GM10248 (cell line): ENCODE measurements at regions of chr17 and their contacts with region 1.

Region 1: GRCh38 chr17:76623271-76624146 is 20.0 kb downstream of the ST6GALNAC1 start:
- DNase-seq: peak; percentile 86
- CTCF ChIP-seq: peak; percentile 95

Region 2: DNA sequence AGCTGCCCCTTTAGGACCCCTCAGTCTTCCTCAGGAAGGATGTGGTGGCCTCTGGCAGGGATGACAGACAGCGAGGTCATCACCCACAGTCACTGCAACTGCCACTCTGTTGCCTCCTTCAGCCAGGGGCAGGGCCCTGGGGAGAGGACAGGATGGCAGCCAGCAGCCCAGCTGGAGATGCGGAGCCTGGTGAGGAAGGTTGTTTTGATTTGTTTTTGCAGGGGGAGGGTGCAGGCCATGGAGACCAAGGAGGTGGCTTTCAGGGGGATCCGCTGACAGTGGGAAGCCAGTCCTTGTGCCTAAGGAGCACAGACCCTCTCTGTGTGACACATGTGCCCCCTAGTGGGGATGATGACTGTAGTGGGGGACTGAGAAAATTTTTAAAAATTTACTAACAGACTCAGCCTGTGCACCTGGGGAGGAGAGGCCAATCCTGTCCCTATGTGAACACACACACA is 76.3 kb before region 1 on chr17:
- CTCF ChIA-PET with region 1: interaction called, 10 read pairs
- POLR2A ChIA-PET with region 1: no interaction called
- DNase-seq: peak; percentile 72
- CTCF ChIP-seq: peak; percentile 55

Region 3: DNA sequence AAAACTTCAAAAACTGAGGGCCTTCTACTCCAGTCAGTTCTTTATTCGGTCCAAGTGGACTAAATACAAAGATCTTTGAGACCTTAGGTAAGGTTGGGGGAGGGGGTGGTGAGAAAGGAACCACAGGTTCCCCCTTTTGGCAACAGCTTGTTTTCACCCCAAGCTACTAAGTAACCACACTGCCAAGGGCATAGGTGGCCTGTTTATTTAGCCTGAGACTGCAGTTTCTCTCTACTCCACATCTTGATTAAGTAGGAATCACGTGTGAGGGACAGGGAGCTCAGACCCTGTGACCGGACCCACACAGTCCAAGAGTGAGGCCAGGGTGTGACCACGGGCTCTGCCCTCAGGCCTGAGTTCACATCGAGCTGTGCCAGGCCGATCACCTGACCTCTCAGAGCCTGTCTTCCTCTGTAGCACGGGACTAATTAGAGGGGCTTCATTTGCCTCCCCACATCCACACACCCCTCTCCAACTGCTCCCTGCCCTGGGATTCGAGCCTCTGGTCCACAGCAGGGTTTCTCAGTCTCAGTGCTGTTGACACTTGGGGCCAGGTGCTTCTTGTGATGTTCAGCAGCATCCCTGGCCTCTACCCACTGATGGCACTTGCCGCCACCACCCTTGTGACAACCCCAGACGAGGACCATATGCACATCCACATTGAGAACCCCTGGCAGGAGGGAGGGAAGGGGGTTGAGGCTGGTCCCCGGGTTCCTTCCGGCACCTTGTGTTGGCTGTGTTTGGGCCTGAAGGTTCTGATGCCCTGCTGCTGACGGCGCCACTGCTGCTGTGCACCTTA is 55.7 kb before region 1 on chr17:
- CTCF ChIA-PET with region 1: interaction called, 28 read pairs
- POLR2A ChIA-PET with region 1: no interaction called
- DNase-seq: no peak
- CTCF ChIP-seq: no peak

Region 4: DNA sequence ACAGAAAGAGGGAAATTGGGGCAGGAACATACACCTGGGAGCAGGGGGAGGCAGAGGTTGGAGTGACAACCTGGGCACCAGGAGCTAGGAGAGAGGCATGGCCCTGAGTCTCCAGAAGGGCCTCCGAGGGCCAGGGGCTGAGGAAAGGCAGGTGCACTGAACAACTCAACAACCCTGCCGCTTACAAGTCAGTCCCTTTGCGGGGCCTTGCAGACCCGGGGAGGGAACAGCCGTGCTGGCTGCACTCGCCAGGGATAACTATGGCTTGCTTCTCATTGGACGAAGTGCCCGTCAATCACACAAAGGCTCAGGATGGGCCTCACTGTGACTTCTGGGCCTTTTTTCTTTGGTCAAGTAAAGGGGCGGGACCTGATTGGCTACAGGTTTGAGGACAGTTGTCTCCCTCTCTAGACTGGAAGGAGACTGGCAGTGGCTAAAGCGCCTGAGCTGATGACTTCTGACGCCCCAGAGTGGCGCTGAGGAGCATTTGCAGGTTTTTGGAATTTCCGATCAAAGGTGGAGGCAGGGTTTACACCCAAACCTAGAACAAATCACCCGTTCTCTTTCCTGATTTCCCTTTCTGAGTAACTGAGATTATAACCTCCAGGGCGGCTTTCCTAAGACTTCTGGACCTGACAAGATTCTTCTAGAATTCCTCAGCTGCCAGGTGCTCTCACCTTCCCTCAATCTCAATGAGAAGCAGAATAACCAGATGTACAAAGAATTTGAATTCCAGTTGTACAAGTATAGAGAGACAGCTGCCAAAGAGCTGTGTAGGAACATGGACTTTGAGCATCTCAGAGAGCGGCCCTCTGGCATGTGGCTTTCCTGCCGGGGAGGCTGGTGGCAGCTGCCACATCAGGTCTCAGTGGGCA is 10.3 kb before region 1 on chr17:
- CTCF ChIA-PET with region 1: interaction called, 51 read pairs
- POLR2A ChIA-PET with region 1: no interaction called
- DNase-seq: no peak
- CTCF ChIP-seq: no peak

Region 5: DNA sequence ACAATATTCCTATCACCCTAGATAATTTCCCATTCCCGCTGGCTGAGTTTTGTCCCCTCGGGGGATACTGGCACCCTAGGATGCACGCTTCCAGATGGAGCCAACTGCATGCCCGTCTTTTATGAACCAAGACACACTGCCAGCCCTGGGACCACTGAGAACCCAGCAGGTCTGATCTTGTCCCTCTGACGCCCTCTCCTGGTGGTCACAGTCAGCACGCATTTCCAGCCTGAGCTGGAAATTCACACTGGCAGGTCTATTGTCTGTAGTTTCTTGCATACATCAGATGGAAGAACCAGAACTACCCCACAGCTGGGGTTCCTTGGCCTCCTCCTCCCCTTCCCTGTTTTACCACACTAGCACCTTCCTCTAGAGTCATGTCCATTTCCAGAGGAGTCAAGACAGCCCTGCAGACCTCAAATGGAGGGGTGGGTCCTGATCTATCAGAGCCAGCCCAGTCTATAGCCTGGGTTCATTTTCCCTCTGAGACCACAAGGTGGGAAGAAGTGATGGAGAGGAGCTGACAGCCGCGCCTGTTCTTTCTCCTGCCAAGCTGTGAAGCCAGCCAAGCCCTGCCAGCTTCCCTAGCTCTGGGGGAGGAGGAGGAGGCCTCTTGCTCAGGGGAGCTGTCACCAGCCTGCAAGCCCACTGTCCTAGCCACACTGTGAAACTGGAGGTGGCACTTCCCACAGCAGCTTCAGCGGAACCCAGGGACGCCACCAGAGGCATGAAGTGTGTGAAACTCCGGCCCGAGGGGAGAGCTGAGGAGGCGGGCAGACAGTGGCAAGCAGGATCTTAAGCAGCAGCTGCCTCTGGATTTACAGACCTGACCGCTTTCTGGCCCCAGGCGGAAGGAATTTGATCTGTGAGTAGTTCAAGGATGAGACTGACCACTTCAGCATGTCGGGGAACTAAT is 58.0 kb after region 1 on chr17:
- CTCF ChIA-PET with region 1: interaction called, 14 read pairs
- POLR2A ChIA-PET with region 1: no interaction called
- DNase-seq: peak; percentile 80
- CTCF ChIP-seq: peak; percentile 86